Adrenal gland (tissue), 19 donors: ENCODE measurements at regions of chr17 and their contacts with region 1.

Region 1: DNA sequence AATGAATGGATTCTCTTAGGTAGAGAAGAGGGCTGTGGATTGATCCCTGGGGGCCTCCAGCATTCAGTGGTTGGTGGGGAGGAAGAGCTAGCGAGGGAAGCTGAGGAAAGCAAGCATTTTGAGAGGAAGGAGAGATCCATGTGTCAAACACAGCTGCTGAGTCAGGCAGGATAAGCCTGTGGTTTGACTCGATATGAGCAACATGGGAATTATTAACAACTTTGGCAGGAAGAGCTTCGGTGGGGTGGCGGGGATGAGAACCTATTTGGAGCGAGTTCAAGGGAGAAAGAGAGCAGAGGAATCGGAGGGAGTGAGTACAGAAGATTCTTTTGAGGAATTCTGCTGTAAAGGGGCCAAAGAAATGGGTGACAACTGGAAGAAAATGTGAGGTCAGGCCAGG is 59.5 kb upstream of the CDC42EP4 start:
- DNase-seq: no peak
- H3K4me3 ChIP-seq: no peak overlapping the region
- H3K27ac ChIP-seq: no peak overlapping the region
- H3K4me1 ChIP-seq: peaks cover 0 to 5% of the 10 kb centered on the region in 2 donors
- H3K27me3 ChIP-seq: no peaks in the 10 kb centered on the region
- CTCF ChIP-seq: no peak
- POLR2A ChIP-seq: no peak

Region 2: GRCh38 chr17:73255671-73256181 is 115.6 kb before region 1 on chr17:
- intact Hi-C with region 1: loop called (anchors 1 to 2 kb)
- DNase-seq: peak in 6 of 7 donors; percentile 33 to 80 (median 49)
- H3K4me3 ChIP-seq: no peak overlapping the region
- H3K27ac ChIP-seq: no peak overlapping the region
- H3K4me1 ChIP-seq: no peaks in the 10 kb centered on the region
- H3K27me3 ChIP-seq: no peaks in the 10 kb centered on the region
- CTCF ChIP-seq: peak; percentile 97 to 100 (median 98)
- POLR2A ChIP-seq: no peak